ENCODE measurements at regions of chr11 and their contacts with region 1.

Region 1: DNA sequence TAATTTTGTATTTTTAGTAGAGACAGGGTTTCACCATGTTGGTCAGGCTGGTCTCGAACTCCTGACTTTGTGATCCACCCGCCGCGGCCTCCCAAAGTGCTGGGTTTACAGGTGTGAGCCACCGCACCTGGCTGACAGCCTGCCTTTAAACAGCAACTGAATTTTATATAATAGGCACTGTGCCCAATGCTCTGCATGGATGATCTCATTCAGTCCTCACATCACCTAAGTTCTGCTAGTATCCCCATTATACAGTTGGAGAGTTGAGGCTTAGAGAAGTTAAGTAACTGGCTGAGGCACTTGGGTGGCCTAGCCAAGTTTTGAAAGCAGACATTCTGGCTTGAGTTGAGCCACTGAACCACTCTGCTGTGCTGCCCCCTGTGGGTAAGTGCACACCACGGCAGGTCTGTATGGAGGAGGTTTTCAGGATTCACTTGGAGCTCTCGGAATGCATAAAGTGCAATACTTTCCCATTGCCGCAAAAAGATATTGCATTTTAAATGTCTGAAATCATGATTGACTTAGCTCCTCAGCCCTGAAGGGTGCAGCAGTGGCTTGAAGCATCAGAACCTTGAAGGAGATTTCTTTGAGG is 112.4 kb downstream of the LDLRAD3 start:
- DNase-seq: peak; percentile 55
- H3K4me3 ChIP-seq: no peak overlapping the region
- H3K27ac ChIP-seq: no peak overlapping the region
- H3K4me1 ChIP-seq: peaks cover 0 to 2% of the 10 kb centered on the region in 2 experiments; a peak in 1 of 4 replicates
- H3K27me3 ChIP-seq: no peaks in the 10 kb centered on the region
- CTCF ChIP-seq: peak; percentile 66
- EP300 ChIP-seq: no peak
- RAD21 ChIP-seq: peak; percentile 78

Region 2: DNA sequence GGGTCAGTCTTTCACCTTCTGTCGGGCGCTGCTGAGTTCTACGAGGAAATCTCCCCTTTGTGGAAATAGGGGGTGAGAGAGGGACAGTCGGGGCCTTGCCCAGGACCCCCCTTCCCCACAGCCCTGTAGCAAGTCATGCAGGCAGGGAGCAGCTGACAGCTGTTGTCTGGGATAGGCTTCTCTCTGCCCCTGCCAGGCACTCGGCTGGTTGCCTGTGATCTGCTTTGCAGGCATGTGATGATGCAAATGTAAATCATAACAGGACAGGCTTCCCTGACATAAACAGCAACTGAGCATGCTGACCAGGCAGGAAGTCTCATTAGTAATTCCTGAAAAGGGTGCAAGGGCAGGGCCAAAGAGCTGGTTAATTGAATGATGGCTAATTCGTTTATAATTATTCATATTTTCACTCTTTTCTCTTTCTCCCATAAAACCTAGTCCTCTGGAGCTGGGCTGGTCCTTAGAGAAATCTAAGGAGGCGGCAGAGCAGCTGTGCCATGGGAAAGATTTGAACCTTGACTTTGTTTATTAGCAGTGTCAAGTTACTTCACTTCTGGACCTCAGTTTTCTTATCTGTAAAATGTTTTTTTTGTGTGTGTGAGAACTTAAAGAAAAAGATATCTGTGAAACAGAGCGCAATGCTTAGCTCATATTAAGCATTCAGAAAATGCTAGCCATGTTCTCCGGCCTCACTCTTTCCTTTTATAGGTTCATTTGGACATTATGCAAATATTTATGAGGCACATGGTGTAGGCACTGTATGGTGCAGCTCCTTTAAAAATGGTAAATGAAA is 17.4 kb after region 1 on chr11:
- CTCF ChIA-PET with region 1: interaction called, 14 read pairs
- POLR2A ChIA-PET with region 1: no interaction called
- DNase-seq: peak; percentile 69
- H3K4me3 ChIP-seq: no peak overlapping the region
- H3K27ac ChIP-seq: peak overlapping the region in 1 of 2 experiments; percentile 73; a peak in 2 of 4 replicates
- H3K4me1 ChIP-seq: peaks cover 12 to 20% of the 10 kb centered on the region in 2 experiments; a peak in 3 of 4 replicates
- H3K27me3 ChIP-seq: no peaks in the 10 kb centered on the region
- CTCF ChIP-seq: no peak
- EP300 ChIP-seq: peak in 1 of 2 experiments; percentile 61; a peak in 2 of 4 replicates
- RAD21 ChIP-seq: peak; percentile 24; the same call in 1 of the 2 replicates

Region 3: DNA sequence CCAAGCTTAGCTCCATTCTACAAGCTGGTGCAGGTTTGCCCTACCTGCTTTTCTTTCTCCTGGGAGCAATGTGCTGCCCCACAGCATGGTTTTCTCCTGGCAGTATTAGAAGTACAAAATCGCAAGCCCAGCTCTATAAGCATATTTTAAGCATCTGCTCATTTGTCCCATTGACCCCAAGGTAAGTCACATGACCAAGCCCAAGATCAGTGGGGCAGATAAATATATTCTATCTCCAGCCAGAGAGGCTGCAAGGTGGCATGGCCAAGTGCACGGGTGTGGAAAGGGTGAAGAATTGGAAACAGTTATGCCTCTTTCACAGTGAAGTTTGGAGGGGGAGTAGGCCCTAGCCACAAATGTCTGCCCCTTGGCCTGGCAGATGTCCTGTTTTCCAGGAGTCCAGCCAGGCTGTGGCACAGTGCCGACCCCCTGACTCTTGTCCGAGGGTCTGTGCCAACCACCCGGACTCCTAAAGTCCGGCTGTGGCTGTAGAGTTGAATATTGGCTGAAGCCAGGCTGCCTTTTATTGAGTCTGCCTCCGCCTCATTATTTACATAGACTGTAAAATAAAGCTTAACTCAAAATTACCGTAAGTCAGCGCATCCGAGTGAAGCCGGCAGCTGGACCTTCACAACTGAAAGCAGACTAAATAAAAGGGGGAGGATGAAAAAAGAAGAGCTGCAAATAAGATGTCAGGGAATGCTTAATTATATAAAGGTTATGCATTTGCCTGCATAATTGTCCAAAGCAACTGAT is 67.3 kb after region 1 on chr11:
- CTCF ChIA-PET with region 1: no interaction called
- POLR2A ChIA-PET with region 1: no interaction called
- DNase-seq: no peak
- H3K4me3 ChIP-seq: no peak overlapping the region
- H3K27ac ChIP-seq: no peak overlapping the region
- H3K4me1 ChIP-seq: peaks cover 0 to 6% of the 10 kb centered on the region in 2 experiments; a peak in 2 of 4 replicates
- H3K27me3 ChIP-seq: no peaks in the 10 kb centered on the region
- CTCF ChIP-seq: no peak
- EP300 ChIP-seq: no peak
- RAD21 ChIP-seq: no peak

Region 4: DNA sequence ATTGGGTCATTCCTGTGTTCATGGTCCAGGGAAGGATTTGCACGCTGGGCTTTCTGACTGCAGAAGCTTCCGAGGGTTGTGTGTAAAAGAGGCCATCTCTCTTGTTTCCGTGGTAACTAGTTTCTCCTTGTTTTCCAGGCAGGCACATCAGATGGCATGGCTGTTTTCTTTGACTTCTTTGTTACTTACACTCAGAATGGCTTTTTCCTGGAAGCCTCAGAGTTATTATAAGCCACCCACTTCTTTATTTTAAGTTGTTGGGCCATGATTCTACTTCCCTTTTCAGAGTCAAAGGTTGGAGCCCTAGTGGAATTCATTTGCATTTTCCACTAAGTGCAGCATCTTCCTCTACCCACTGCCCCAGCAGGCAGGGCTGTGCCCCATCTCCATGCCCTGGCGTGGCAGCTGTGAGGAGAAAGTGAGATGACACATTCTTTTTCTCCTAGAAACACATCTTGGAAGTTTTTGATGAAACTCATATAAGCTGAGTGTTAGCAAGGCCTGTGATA is 334.8 kb after region 1 on chr11:
- CTCF ChIA-PET with region 1: no interaction called
- POLR2A ChIA-PET with region 1: no interaction called
- DNase-seq: no peak
- H3K4me3 ChIP-seq: no peak overlapping the region
- H3K27ac ChIP-seq: no peak overlapping the region
- H3K4me1 ChIP-seq: no peaks in the 10 kb centered on the region
- H3K27me3 ChIP-seq: no peaks in the 10 kb centered on the region
- CTCF ChIP-seq: no peak
- EP300 ChIP-seq: no peak
- RAD21 ChIP-seq: no peak

Measured in SK-N-SH (cell line).